Right ventricle myocardium inferior (tissue), 1 donor: ENCODE measurements at regions of chr1 and their contacts with region 1.

Region 1: GRCh38 chr1:229887043-229887822 is 179.8 kb upstream of the GALNT2 start:
- DNase-seq: no peak
- ATAC-seq: peak; percentile 91

Region 2: DNA sequence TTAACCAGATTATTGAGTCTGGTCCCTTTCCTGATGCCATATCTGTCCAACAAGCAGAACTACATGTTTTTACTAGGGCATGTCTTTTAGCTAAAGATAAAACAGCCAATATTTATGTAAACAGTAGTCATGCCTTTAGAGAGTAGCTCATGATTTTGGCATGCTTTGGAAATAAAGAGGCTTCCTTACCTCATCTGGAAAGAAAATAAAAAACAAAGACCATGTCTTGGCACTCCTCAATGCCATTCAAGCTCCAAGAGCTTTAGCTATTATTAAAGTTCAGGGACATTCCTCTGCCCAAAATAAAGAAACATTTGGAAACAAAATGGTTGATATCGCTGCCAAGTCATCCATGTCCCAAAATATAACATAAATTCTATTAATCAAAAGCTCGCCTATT is 58.8 kb before region 1 on chr1:
- intact Hi-C with region 1: loop called (anchors 5 kb)
- DNase-seq: no peak
- ATAC-seq: no peak

Region 3: DNA sequence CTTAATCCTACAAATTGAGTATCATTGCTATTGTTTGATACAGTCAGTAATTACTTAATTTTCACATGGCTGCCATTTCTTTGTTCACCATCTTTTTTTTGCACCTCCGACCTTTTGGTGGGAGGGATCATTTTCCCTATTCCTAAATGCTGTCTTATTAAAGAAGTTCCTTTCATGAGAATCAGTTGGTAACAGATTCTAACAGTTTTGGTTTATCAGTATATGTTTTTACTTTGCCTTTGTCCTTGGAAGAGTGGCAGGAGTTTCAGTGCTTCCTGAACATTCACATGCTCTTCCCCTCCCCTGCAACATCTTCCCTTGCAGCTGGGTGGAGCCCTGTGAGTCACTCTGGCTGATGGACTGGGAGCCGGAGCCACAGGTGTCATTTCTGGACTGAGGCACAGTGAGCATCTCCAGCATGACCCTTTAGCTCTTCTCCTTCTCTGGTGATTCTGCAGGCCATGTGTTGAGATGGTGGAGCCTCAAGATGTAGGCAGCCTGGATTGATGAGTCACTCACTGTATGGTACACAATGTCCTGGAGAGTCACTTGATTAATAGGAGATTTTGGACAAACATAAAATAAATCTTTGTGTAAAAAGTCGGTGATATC is 43.5 kb before region 1 on chr1:
- intact Hi-C with region 1: loop called (anchors 1 kb)
- DNase-seq: no peak
- ATAC-seq: peak; percentile 80